B cell (primary cell): ENCODE measurements at regions of chr2 and their contacts with region 1.

Region 1: GRCh38 chr2:119366649-119367471 is at the starts of genes C2orf76 and DBI:
- DNase-seq: peak; percentile 95
- ATAC-seq: peak; percentile 96
- H3K4me3 ChIP-seq: peak within 1 kb of the TSS; percentile 77 to 100 (median 94)
- H3K4me3 Mint-ChIP-seq: peak within 1 kb of the TSS; percentile 99
- H3K27ac ChIP-seq: peak within 1 kb of the TSS; percentile 84 to 91
- H3K27ac Mint-ChIP-seq: peak within 1 kb of the TSS; percentile 92
- H3K4me1 ChIP-seq: peaks cover 26 to 44% of the 10 kb centered on the region in 2 donors
- H3K4me1 Mint-ChIP-seq: peaks cover 57% of the 10 kb centered on the region
- H3K27me3 ChIP-seq: no peaks in the 10 kb centered on the region
- H3K27me3 Mint-ChIP-seq: no peaks in the 10 kb centered on the region
- CTCF ChIP-seq: no peak
- total RNA-seq, gene C2orf76: 11.5 and 13.6 TPM in 2 replicates
- total RNA-seq, gene DBI: 40.3 and 45.2 TPM in 2 replicates

Region 2: GRCh38 chr2:119223521-119224390 is 143.1 kb before region 1 on chr2 and contains the start of gene STEAP3:
- CTCF ChIA-PET with region 1: no interaction called
- POLR2A ChIA-PET with region 1: no interaction called
- intact Hi-C with region 1: loop called (anchors 5 kb)
- DNase-seq: peak; percentile 72
- ATAC-seq: peak; percentile 71
- H3K4me3 ChIP-seq: peak within 1 kb of the TSS in 4 of 5 experiments; percentile 43 to 70 (median 61)
- H3K4me3 Mint-ChIP-seq: peak within 1 kb of the TSS; percentile 77
- H3K27ac ChIP-seq: no peak within 1 kb of the TSS
- H3K27ac Mint-ChIP-seq: no peak within 1 kb of the TSS
- H3K4me1 ChIP-seq: peaks cover 6 to 13% of the 10 kb centered on the region in 2 donors
- H3K4me1 Mint-ChIP-seq: peaks cover 6% of the 10 kb centered on the region
- H3K27me3 ChIP-seq: peaks cover 0 to 30% (median 6%) of the 10 kb centered on the region in 4 experiments
- H3K27me3 Mint-ChIP-seq: peaks cover 33% of the 10 kb centered on the region
- CTCF ChIP-seq: no peak
- total RNA-seq, gene STEAP3: 1.1 TPM in 2 replicates

Region 3: GRCh38 chr2:119338826-119339561 is 27.9 kb before region 1 on chr2:
- CTCF ChIA-PET with region 1: no interaction called
- POLR2A ChIA-PET with region 1: no interaction called
- intact Hi-C with region 1: loop called (anchors 1 kb)
- DNase-seq: peak; percentile 77
- ATAC-seq: peak; percentile 98
- H3K4me3 ChIP-seq: peak overlapping the region in 1 of 5 experiments; percentile 28
- H3K4me3 Mint-ChIP-seq: peak overlapping the region; percentile 72
- H3K27ac ChIP-seq: peak overlapping the region; percentile 54 to 62
- H3K27ac Mint-ChIP-seq: peak overlapping the region; percentile 93
- H3K4me1 ChIP-seq: peaks cover 28 to 29% of the 10 kb centered on the region in 2 donors
- H3K4me1 Mint-ChIP-seq: peaks cover 23% of the 10 kb centered on the region
- H3K27me3 ChIP-seq: no peaks in the 10 kb centered on the region
- H3K27me3 Mint-ChIP-seq: no peaks in the 10 kb centered on the region
- CTCF ChIP-seq: no peak

Region 4: DNA sequence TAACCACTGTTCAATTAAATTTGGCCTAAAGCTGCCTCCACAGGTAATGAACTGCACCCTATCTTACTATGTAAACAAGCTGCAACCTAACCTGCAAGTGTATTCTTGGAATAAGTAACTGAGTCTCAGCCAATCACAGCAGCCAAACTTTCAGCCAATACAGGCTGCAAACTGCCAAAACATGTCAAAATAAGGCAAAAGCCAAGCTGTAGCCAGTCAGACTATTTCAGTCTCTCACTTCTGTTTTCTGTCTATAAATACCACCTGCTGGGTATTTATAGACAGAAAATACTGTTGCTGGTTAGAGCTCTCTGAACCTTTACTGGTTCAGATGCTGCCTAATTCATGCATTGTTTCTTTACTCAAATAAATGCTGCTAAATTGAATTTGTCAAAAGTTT is 14.5 kb before region 1 on chr2:
- CTCF ChIA-PET with region 1: interaction called, 3 read pairs
- POLR2A ChIA-PET with region 1: interaction called, 4 read pairs
- intact Hi-C with region 1: loop called (anchors 1 kb)
- DNase-seq: peak; percentile 57
- ATAC-seq: peak; percentile 66
- H3K4me3 ChIP-seq: no peak overlapping the region
- H3K4me3 Mint-ChIP-seq: no peak overlapping the region
- H3K27ac ChIP-seq: peak overlapping the region; percentile 30 to 61
- H3K27ac Mint-ChIP-seq: peak overlapping the region; percentile 53
- H3K4me1 ChIP-seq: peaks cover 29 to 32% of the 10 kb centered on the region in 2 donors
- H3K4me1 Mint-ChIP-seq: peaks cover 40% of the 10 kb centered on the region
- H3K27me3 ChIP-seq: no peaks in the 10 kb centered on the region
- H3K27me3 Mint-ChIP-seq: no peaks in the 10 kb centered on the region
- CTCF ChIP-seq: no peak

Region 5: DNA sequence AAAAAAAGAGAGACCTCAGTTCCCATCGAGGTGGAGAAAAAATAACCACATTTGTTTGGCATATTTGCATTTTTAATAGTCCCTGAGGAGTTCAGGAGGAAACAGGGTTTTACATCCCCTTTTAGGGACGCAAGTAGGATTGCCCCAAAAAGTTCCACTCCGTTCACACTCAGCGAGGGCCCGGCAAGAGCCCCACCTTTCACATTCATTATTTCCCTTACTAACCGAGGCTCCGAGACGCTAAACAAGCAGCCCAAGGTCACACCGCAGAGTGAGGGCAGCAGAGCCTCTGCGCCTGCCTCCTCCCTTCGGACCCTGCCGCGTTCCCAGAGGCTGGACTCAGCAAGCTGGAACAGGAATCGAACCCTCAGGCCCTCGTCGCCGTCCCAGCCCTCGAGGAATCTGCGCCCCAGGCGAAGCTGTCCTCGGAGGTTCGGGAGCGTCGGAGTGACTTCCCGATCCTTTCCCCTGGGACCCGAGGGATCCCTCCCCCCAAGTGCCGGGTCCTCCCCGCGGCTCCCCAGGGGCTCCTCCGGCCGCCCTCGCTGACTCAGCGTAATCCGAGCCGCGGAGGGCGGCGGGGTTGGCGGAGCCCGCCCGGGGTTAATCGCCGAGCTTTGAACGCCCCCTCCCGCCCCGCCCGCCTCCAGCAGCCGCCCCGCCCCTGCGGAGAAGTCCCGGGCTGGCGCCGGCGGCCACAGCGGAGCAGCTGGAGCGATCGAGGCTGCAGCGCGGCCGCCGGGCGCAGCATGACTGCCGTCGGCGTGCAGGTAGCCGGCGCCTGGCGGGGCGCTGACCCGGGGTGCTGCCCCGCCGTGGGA is 64.5 kb after region 1 on chr2 and contains the start of gene TMEM37:
- CTCF ChIA-PET with region 1: no interaction called
- POLR2A ChIA-PET with region 1: no interaction called
- intact Hi-C with region 1: loop called (anchors 1 kb)
- DNase-seq: peak; percentile 63
- ATAC-seq: peak; percentile 72
- H3K4me3 ChIP-seq: peak within 1 kb of the TSS; percentile 11 to 67 (median 45)
- H3K4me3 Mint-ChIP-seq: peak within 1 kb of the TSS; percentile 88
- H3K27ac ChIP-seq: no peak within 1 kb of the TSS
- H3K27ac Mint-ChIP-seq: no peak within 1 kb of the TSS
- H3K4me1 ChIP-seq: peaks cover 20 to 21% of the 10 kb centered on the region in 2 donors
- H3K4me1 Mint-ChIP-seq: peaks cover 24% of the 10 kb centered on the region
- H3K27me3 ChIP-seq: peaks cover 0 to 69% (median 25%) of the 10 kb centered on the region in 4 experiments
- H3K27me3 Mint-ChIP-seq: peaks cover 78% of the 10 kb centered on the region
- CTCF ChIP-seq: no peak
- total RNA-seq, gene TMEM37: not detected in 2 replicates

Region 6: GRCh38 chr2:119678998-119679710 is 312.3 kb after region 1 on chr2 and contains the start of gene TMEM177:
- CTCF ChIA-PET with region 1: no interaction called
- POLR2A ChIA-PET with region 1: no interaction called
- intact Hi-C with region 1: loop called (anchors 1 kb)
- DNase-seq: peak; percentile 90
- ATAC-seq: peak; percentile 96
- H3K4me3 ChIP-seq: peak within 1 kb of the TSS; percentile 76 to 100 (median 93)
- H3K4me3 Mint-ChIP-seq: peak within 1 kb of the TSS; percentile 84
- H3K27ac ChIP-seq: peak within 1 kb of the TSS; percentile 50 to 60
- H3K27ac Mint-ChIP-seq: peak within 1 kb of the TSS; percentile 84
- H3K4me1 ChIP-seq: peaks cover 10 to 20% of the 10 kb centered on the region in 2 donors
- H3K4me1 Mint-ChIP-seq: peaks cover 23% of the 10 kb centered on the region
- H3K27me3 ChIP-seq: no peaks in the 10 kb centered on the region
- H3K27me3 Mint-ChIP-seq: no peaks in the 10 kb centered on the region
- CTCF ChIP-seq: no peak
- total RNA-seq, gene TMEM177: 10.6 and 12.1 TPM in 2 replicates

Region 7: GRCh38 chr2:120223034-120223912 is 856.4 kb after region 1 on chr2 and contains the start of gene TMEM185B:
- CTCF ChIA-PET with region 1: no interaction called
- POLR2A ChIA-PET with region 1: no interaction called
- intact Hi-C with region 1: loop called (anchors 5 kb)
- DNase-seq: peak; percentile 93
- ATAC-seq: peak; percentile 96
- H3K4me3 ChIP-seq: peak within 1 kb of the TSS; percentile 68 to 83 (median 71)
- H3K4me3 Mint-ChIP-seq: peak within 1 kb of the TSS; percentile 89
- H3K27ac ChIP-seq: peak within 1 kb of the TSS; percentile 93 to 96
- H3K27ac Mint-ChIP-seq: peak within 1 kb of the TSS; percentile 95
- H3K4me1 ChIP-seq: peaks cover 25 to 31% of the 10 kb centered on the region in 2 donors
- H3K4me1 Mint-ChIP-seq: peaks cover 55% of the 10 kb centered on the region
- H3K27me3 ChIP-seq: no peaks in the 10 kb centered on the region
- H3K27me3 Mint-ChIP-seq: no peaks in the 10 kb centered on the region
- CTCF ChIP-seq: peak; percentile 38
- total RNA-seq, gene TMEM185B: 29.6 TPM in 2 replicates